Endothelial cell of umbilical vein (primary cell): ENCODE measurements at regions of chr16 and their contacts with region 1.

Region 1: GRCh38 chr16:57185944-57186871 is at the starts of genes PSME3IP1 and RSPRY1:
- DNase-seq: peak; percentile 100
- H3K4me3 ChIP-seq: peak within 1 kb of the TSS; percentile 88 to 95 (median 89)
- H3K27ac ChIP-seq: peak within 1 kb of the TSS; percentile 89
- H3K4me1 ChIP-seq: peaks cover 34% of the 10 kb centered on the region
- H3K27me3 ChIP-seq: no peaks in the 10 kb centered on the region
- CTCF ChIP-seq: no peak
- POLR2A ChIP-seq: peak; percentile 85
- total RNA-seq, gene PSME3IP1: 91.8 and 98.2 TPM in 2 replicates
- total RNA-seq, gene RSPRY1: 55.1 and 55.8 TPM in 2 replicates

Region 2: GRCh38 chr16:57084257-57084770 is 101.9 kb before region 1 on chr16:
- CTCF ChIA-PET with region 1: interaction called, 3 read pairs
- POLR2A ChIA-PET with region 1: no interaction called
- dilution Hi-C with region 1: no loop called
- intact Hi-C with region 1: loop called (anchors 1 kb)
- DNase-seq: peak; percentile 79
- H3K4me3 ChIP-seq: no peak overlapping the region
- H3K27ac ChIP-seq: no peak overlapping the region
- H3K4me1 ChIP-seq: no peaks in the 10 kb centered on the region
- H3K27me3 ChIP-seq: no peaks in the 10 kb centered on the region
- CTCF ChIP-seq: peak; percentile 95 to 98
- POLR2A ChIP-seq: no peak

Region 3: GRCh38 chr16:57147381-57148221 is 38.6 kb before region 1 on chr16:
- CTCF ChIA-PET with region 1: no interaction called
- POLR2A ChIA-PET with region 1: no interaction called
- dilution Hi-C with region 1: loop called (anchors 5 kb)
- intact Hi-C with region 1: loop called (anchors 2 kb)
- DNase-seq: peak; percentile 79
- H3K4me3 ChIP-seq: no peak overlapping the region
- H3K27ac ChIP-seq: peak overlapping the region; percentile 84
- H3K4me1 ChIP-seq: peaks cover 48% of the 10 kb centered on the region
- H3K27me3 ChIP-seq: no peaks in the 10 kb centered on the region
- CTCF ChIP-seq: no peak
- POLR2A ChIP-seq: peak; percentile 61

Region 4: GRCh38 chr16:57244767-57245471 is 58.7 kb after region 1 on chr16 and contains the start of gene ARL2BP:
- CTCF ChIA-PET with region 1: interaction called, 3 read pairs
- POLR2A ChIA-PET with region 1: interaction called, 3 read pairs
- dilution Hi-C with region 1: no loop called
- intact Hi-C with region 1: loop called (anchors 2 kb)
- DNase-seq: peak; percentile 99
- H3K4me3 ChIP-seq: peak within 1 kb of the TSS; percentile 75 to 89 (median 85)
- H3K27ac ChIP-seq: peak within 1 kb of the TSS; percentile 72
- H3K4me1 ChIP-seq: peaks cover 11% of the 10 kb centered on the region
- H3K27me3 ChIP-seq: no peaks in the 10 kb centered on the region
- CTCF ChIP-seq: peak; percentile 3 to 10
- POLR2A ChIP-seq: peak; percentile 89
- total RNA-seq, gene ARL2BP: 76.7 and 80.4 TPM in 2 replicates

Region 5: GRCh38 chr16:57260294-57260929 is 74.2 kb after region 1 on chr16:
- CTCF ChIA-PET with region 1: no interaction called
- POLR2A ChIA-PET with region 1: no interaction called
- dilution Hi-C with region 1: no loop called
- intact Hi-C with region 1: loop called (anchors 2 kb)
- DNase-seq: peak; percentile 98
- H3K4me3 ChIP-seq: no peak overlapping the region
- H3K27ac ChIP-seq: peak overlapping the region; percentile 92
- H3K4me1 ChIP-seq: peaks cover 23% of the 10 kb centered on the region
- H3K27me3 ChIP-seq: no peaks in the 10 kb centered on the region
- CTCF ChIP-seq: no peak
- POLR2A ChIP-seq: peak; percentile 51

Region 6: GRCh38 chr16:57284208-57284951 is 98.2 kb after region 1 on chr16 and contains the start of gene PLLP:
- CTCF ChIA-PET with region 1: no interaction called
- POLR2A ChIA-PET with region 1: no interaction called
- dilution Hi-C with region 1: no loop called
- intact Hi-C with region 1: loop called (anchors 5 kb)
- DNase-seq: peak; percentile 38
- H3K4me3 ChIP-seq: peak within 1 kb of the TSS; percentile 8 to 38 (median 16)
- H3K27ac ChIP-seq: no peak within 1 kb of the TSS
- H3K4me1 ChIP-seq: peaks cover 18% of the 10 kb centered on the region
- H3K27me3 ChIP-seq: no peaks in the 10 kb centered on the region
- CTCF ChIP-seq: no peak
- POLR2A ChIP-seq: no peak
- total RNA-seq, gene PLLP: 3.1 and 4.4 TPM in 2 replicates

Region 7: GRCh38 chr16:57416122-57416509 is 229.9 kb after region 1 on chr16:
- CTCF ChIA-PET with region 1: no interaction called
- POLR2A ChIA-PET with region 1: no interaction called
- dilution Hi-C with region 1: no loop called
- intact Hi-C with region 1: loop called (anchors 5 kb)
- DNase-seq: no peak
- H3K4me3 ChIP-seq: no peak overlapping the region
- H3K27ac ChIP-seq: no peak overlapping the region
- H3K4me1 ChIP-seq: peaks cover 7% of the 10 kb centered on the region
- H3K27me3 ChIP-seq: no peaks in the 10 kb centered on the region
- CTCF ChIP-seq: no peak
- POLR2A ChIP-seq: no peak